ENCODE measurements at regions of chr7 and their contacts with region 1.

Region 1: GRCh38 chr7:139075031-139075652 is 34.4 kb downstream of the ZC3HAV1 start:
- H3K4me3 ChIP-seq: no peak overlapping the region
- H3K27ac ChIP-seq: no peak overlapping the region
- H3K4me1 ChIP-seq: no peaks in the 10 kb centered on the region
- CTCF ChIP-seq: 0 out of 2 replicates have a peak, but pooled peaks have one; percentile 32

Region 2: DNA sequence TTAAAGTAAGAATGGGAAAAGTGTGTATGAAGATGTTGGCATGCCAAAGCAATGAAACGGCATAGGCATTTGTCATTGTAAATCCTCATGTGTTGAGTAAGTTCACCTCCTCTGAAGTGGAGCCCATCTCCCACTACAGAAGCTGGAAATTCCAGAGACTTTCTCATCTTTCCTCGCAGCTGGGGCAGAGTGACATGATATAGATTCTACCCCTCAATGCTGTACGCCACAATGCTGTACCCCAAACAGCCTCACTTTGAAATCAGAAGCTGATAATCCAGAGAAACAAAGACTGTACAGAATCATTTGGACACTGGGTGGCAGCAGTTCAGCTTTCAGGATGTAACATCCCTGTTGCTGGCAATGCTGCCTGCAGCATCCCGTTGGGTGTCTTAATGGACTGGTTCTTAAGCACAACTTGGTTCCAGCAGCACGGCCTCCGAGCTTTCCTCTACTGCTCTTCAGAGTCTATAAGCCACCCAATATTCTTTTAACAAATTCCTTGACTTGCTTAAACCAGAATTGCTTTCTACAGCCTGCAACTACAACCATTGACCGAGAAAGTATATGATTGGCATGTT is 58.1 kb before region 1 on chr7:
- CTCF ChIA-PET with region 1: interaction called, 30 read pairs
- POLR2A ChIA-PET with region 1: no interaction called
- H3K4me3 ChIP-seq: no peak overlapping the region
- H3K27ac ChIP-seq: no peak overlapping the region
- H3K4me1 ChIP-seq: no peaks in the 10 kb centered on the region
- CTCF ChIP-seq: peak; percentile 75

Region 3: DNA sequence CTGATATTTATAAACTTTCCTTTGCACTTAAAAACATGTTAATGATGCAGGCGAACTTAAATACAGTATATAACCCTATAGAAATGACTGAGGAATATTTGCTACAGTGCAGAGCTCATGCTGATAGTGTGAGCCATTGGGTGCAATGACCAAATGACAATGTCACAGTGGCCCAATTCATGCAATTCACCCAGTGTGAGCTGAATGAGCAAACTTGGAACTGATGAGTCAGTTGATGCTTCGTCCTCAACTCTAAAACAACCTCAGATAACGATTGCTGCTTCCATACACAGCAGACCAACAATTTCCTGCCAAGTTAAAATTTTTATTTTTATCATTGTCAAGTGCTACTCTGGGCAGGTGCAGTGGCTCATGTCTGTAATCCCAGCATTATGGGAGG is 27.2 kb before region 1 on chr7:
- CTCF ChIA-PET with region 1: interaction called, 12 read pairs
- POLR2A ChIA-PET with region 1: no interaction called
- H3K4me3 ChIP-seq: no peak overlapping the region
- H3K27ac ChIP-seq: no peak overlapping the region
- H3K4me1 ChIP-seq: no peaks in the 10 kb centered on the region
- CTCF ChIP-seq: no peak

Region 4: DNA sequence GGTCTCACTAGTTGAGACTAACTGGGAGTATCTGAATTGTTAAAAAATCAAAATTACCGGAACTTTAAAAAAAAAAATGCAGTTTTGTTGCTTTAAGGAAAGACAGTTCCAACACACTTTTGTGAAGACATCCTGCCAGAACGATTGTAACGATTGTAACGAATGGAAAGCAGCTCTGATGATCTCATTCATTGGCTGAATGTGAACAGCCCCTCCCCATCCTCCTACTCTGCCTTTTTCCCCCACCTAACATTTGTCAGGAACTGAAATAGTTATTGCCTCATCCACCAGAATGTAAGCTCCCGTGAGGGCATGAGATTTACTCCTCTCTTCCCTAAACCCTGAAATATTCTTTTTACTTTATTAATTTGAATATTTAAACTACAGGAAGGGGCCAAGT is 16.2 kb before region 1 on chr7:
- CTCF ChIA-PET with region 1: interaction called, 19 read pairs
- POLR2A ChIA-PET with region 1: interaction called, 3 read pairs
- H3K4me3 ChIP-seq: no peak overlapping the region
- H3K27ac ChIP-seq: no peak overlapping the region
- H3K4me1 ChIP-seq: no peaks in the 10 kb centered on the region
- CTCF ChIP-seq: no peak

Region 5: GRCh38 chr7:139086454-139086853 is 11.3 kb after region 1 on chr7:
- CTCF ChIA-PET with region 1: interaction called, 15 read pairs
- POLR2A ChIA-PET with region 1: no interaction called
- H3K4me3 ChIP-seq: no peak overlapping the region
- H3K27ac ChIP-seq: no peak overlapping the region
- H3K4me1 ChIP-seq: no peaks in the 10 kb centered on the region
- CTCF ChIP-seq: no peak

Region 6: DNA sequence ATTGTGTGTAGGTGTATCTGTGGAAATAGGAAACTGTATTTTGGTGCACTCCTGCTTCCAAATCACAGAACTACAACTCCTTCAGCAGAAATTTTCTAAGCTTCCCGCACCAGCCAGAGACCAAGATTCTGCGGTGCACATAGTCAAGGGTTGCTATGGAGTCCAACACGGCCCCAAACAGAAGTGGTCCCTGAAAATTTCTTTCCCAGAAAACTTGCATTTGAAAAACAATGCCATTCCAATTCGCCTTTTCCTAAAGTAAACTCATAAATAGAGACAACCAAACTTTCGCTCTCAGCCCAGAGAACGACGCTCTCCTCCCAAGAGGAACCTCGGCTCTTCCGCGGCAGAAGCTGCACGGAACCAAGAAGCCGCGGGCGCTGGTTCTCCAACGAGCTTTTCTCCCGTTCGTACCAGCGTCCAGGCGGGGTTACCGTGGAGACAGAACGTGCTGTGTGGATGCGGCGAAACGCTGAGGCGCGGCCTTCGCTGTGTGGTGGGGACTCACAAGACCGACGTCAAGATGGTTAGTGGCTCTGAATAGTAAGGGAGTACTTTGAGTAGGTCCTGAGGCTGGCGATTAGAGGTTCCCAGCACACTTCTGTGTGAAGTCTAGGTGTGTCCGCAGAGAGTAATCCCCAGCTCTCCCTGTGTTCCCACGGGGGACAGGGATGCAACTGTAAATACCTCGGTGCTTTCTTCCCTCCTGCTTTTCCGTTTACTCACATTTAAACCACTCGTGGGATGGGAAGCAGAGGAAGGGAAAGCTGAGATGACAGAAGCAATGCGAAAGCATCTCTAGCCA is 58.4 kb after region 1 on chr7:
- CTCF ChIA-PET with region 1: interaction called, 13 read pairs
- POLR2A ChIA-PET with region 1: no interaction called
- H3K4me3 ChIP-seq: peak overlapping the region; percentile 60
- H3K27ac ChIP-seq: no peak overlapping the region
- H3K4me1 ChIP-seq: no peaks in the 10 kb centered on the region
- CTCF ChIP-seq: no peak

Measured in HEK293 (cell line).